Activated CD4-positive, alpha-beta T cell treated with anti-CD3 and anti-CD28 coated beads, Interleukin-2, amount 10 ng/mL, durations not matched to agents 7 days and 5 days (primary cell): ENCODE measurements at regions of chr5 and their contacts with region 1.

Region 1: GRCh38 chr5:66595756-66596635 is at the start of gene MAST4:
- DNase-seq: peak; percentile 79
- H3K4me3 Mint-ChIP-seq: peak within 1 kb of the TSS; percentile 68
- H3K27ac Mint-ChIP-seq: peak within 1 kb of the TSS; percentile 33
- H3K4me1 Mint-ChIP-seq: peaks cover 26% of the 10 kb centered on the region
- H3K27me3 Mint-ChIP-seq: peaks cover 67% of the 10 kb centered on the region
- total RNA-seq, gene MAST4: 23.5 to 25.8 TPM

Region 2: GRCh38 chr5:66382152-66382551 is 213.8 kb before region 1 on chr5:
- CTCF ChIA-PET with region 1: no interaction called
- POLR2A ChIA-PET with region 1: interaction called, 12 read pairs
- DNase-seq: no peak
- H3K4me3 Mint-ChIP-seq: no peak overlapping the region
- H3K27ac Mint-ChIP-seq: no peak overlapping the region
- H3K4me1 Mint-ChIP-seq: no peaks in the 10 kb centered on the region
- H3K27me3 Mint-ChIP-seq: no peaks in the 10 kb centered on the region

Region 3: DNA sequence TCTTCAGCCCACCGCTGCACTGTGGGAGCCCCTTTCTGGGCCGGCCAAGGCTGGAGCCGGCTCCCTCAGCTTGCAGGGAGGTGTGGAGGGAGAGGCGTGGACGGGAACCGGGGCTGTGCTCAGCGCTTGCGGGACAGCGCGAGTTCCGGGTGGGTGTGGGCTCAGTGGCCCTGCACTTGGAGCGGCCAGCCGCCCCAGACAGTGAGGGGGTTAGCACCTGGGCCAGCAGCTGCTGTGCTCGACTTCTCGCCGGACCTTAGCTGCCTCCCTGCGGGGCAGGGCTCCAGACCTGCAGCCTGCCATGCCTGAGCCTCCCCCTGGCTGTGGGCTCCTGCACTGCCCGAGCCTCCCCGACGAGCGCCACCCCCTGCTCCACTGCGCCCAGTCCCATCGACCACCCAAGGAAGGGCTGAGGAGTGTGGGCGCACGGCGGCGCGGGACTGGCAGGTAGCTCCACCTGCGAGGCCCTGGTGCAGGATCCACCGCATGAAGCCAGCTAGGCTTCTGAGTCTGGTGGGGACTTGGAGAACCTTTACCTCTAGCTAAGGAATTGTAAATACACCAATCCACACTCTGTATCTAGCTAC is 92.7 kb before region 1 on chr5:
- CTCF ChIA-PET with region 1: no interaction called
- POLR2A ChIA-PET with region 1: no interaction called
- DNase-seq: no peak
- H3K4me3 Mint-ChIP-seq: no peak overlapping the region
- H3K27ac Mint-ChIP-seq: no peak overlapping the region
- H3K4me1 Mint-ChIP-seq: no peaks in the 10 kb centered on the region
- H3K27me3 Mint-ChIP-seq: no peaks in the 10 kb centered on the region

Region 4: GRCh38 chr5:66518716-66519171 is 77.3 kb before region 1 on chr5:
- CTCF ChIA-PET with region 1: no interaction called
- POLR2A ChIA-PET with region 1: no interaction called
- DNase-seq: no peak
- H3K4me3 Mint-ChIP-seq: no peak overlapping the region
- H3K27ac Mint-ChIP-seq: no peak overlapping the region
- H3K4me1 Mint-ChIP-seq: no peaks in the 10 kb centered on the region
- H3K27me3 Mint-ChIP-seq: no peaks in the 10 kb centered on the region

Region 5: GRCh38 chr5:66582499-66583165 is 13.4 kb before region 1 on chr5:
- CTCF ChIA-PET with region 1: no interaction called
- POLR2A ChIA-PET with region 1: no interaction called
- DNase-seq: no peak
- H3K4me3 Mint-ChIP-seq: no peak overlapping the region
- H3K27ac Mint-ChIP-seq: no peak overlapping the region
- H3K4me1 Mint-ChIP-seq: no peaks in the 10 kb centered on the region
- H3K27me3 Mint-ChIP-seq: peaks cover 42% of the 10 kb centered on the region